ENCODE measurements at regions of chr11 and their contacts with region 1.

Region 1: GRCh38 chr11:109853156-109853776 is 239.9 kb upstream of the ZC3H12C start:
- DNase-seq: peak; percentile 89
- H3K4me3 ChIP-seq: no peak overlapping the region
- H3K27ac ChIP-seq: no peak overlapping the region
- H3K4me1 ChIP-seq: peaks cover 31% of the 10 kb centered on the region
- H3K27me3 ChIP-seq: no peaks in the 10 kb centered on the region
- CTCF ChIP-seq: peak; percentile 89

Region 2: DNA sequence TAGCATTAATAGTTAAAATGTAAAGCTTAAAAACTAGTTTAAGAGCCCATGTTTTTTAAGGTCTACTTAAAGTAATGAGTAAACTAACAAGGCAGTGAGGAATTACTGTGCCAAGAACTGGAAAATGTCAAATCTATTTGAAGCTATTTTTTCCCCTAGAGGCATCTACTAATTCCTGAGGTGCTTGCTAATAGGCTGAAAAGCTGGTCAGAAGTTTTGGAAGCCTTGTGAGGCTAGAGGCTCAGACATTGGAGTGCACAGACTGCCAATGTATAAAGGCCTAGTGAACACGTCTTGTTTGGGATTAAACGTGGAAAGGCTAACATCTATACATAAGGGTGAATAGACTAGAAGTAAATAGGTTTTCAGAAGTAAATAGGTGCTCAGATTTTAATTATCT is 567.8 kb before region 1 on chr11:
- CTCF ChIA-PET with region 1: no interaction called
- POLR2A ChIA-PET with region 1: no interaction called
- intact Hi-C with region 1: no loop called
- DNase-seq: no peak
- H3K4me3 ChIP-seq: no peak overlapping the region
- H3K27ac ChIP-seq: no peak overlapping the region
- H3K4me1 ChIP-seq: no peaks in the 10 kb centered on the region
- H3K27me3 ChIP-seq: peaks cover 7% of the 10 kb centered on the region
- CTCF ChIP-seq: no peak

Region 3: GRCh38 chr11:109939166-109939810 is 86.0 kb after region 1 on chr11:
- CTCF ChIA-PET with region 1: interaction called, 14 read pairs
- POLR2A ChIA-PET with region 1: interaction called, 3 read pairs
- intact Hi-C with region 1: loop called (anchors 1 kb)
- DNase-seq: peak; percentile 91
- H3K4me3 ChIP-seq: no peak overlapping the region
- H3K27ac ChIP-seq: no peak overlapping the region
- H3K4me1 ChIP-seq: peaks cover 7% of the 10 kb centered on the region
- H3K27me3 ChIP-seq: no peaks in the 10 kb centered on the region
- CTCF ChIP-seq: peak; percentile 90

Region 4: DNA sequence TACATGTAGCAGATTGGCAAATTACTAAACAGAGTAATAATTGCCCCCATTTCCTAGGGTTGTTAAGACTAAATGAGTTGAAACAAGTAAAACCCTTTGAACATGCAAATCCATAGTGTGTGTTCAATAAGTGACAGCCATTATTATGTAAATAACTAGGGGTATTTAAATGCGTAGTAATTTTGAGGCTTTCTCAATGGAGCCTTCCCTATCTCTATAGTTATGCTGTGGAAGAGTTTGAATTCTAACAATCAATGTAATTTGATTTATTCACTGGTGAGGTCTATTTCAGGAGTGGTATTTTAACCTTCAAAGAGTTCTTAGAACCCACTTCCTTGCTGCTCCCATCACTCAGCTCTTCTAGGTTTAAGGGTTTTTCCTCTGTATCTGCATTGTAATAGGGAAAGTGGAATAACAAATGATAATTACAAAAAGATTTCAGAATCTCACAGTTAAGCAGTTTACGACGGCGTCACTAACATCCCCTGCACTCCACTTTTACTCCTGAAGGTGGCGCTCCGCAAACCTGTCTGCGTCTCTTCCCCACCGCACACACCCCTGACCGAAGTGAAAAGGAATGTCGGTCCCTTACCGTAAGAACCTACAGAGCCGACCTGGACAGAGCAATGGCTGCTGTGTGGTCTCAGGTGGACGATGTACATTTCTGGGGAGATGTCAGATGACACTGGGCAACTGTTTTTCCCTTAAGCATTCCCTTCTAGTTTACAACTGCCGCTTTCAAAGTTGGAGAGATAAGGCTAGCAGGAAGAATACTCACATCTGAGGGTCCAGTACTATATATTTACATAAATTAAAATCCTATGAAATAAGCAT is 320.8 kb after region 1 on chr11:
- CTCF ChIA-PET with region 1: no interaction called
- POLR2A ChIA-PET with region 1: no interaction called
- intact Hi-C with region 1: loop called (anchors 10 kb)
- DNase-seq: peak; percentile 87
- H3K4me3 ChIP-seq: peak overlapping the region; percentile 9
- H3K27ac ChIP-seq: no peak overlapping the region
- H3K4me1 ChIP-seq: peaks cover 45% of the 10 kb centered on the region
- H3K27me3 ChIP-seq: no peaks in the 10 kb centered on the region
- CTCF ChIP-seq: peak; percentile 98

Measured in A673 (cell line).